ENCODE measurements at regions of chr6 and their contacts with region 1.

Region 1: GRCh38 chr6:79302341-79302740 is 67.9 kb upstream of the HMGN3 start:
- DNase-seq: peak; percentile 48 to 84
- H3K4me3 ChIP-seq: no peak overlapping the region
- H3K27ac ChIP-seq: peak overlapping the region; percentile 65
- H3K4me1 ChIP-seq: peaks cover 37% of the 10 kb centered on the region
- H3K27me3 ChIP-seq: no peaks in the 10 kb centered on the region
- CTCF ChIP-seq: no peak

Region 2: GRCh38 chr6:77457720-77458349 is 1844.5 kb before region 1 on chr6:
- CTCF ChIA-PET with region 1: no interaction called
- POLR2A ChIA-PET with region 1: no interaction called
- intact Hi-C with region 1: no loop called
- DNase-seq: peak in 1 of 2 experiments; percentile 56
- H3K4me3 ChIP-seq: no peak overlapping the region
- H3K27ac ChIP-seq: no peak overlapping the region
- H3K4me1 ChIP-seq: no peaks in the 10 kb centered on the region
- H3K27me3 ChIP-seq: no peaks in the 10 kb centered on the region
- CTCF ChIP-seq: peak; percentile 66

Region 3: GRCh38 chr6:78397499-78397898 is 904.8 kb before region 1 on chr6:
- CTCF ChIA-PET with region 1: no interaction called
- POLR2A ChIA-PET with region 1: interaction called, 17 read pairs
- intact Hi-C with region 1: no loop called
- DNase-seq: no peak
- H3K4me3 ChIP-seq: no peak overlapping the region
- H3K27ac ChIP-seq: no peak overlapping the region
- H3K4me1 ChIP-seq: no peaks in the 10 kb centered on the region
- H3K27me3 ChIP-seq: no peaks in the 10 kb centered on the region
- CTCF ChIP-seq: no peak

Region 4: GRCh38 chr6:79233611-79234149 is 68.7 kb before region 1 on chr6:
- CTCF ChIA-PET with region 1: no interaction called
- POLR2A ChIA-PET with region 1: no interaction called
- intact Hi-C with region 1: loop called (anchors 1 kb)
- DNase-seq: peak; percentile 66 to 80
- H3K4me3 ChIP-seq: peak overlapping the region; percentile 92
- H3K27ac ChIP-seq: peak overlapping the region; percentile 6; the same call in 1 of the 2 replicates
- H3K4me1 ChIP-seq: peaks cover 10% of the 10 kb centered on the region
- H3K27me3 ChIP-seq: no peaks in the 10 kb centered on the region
- CTCF ChIP-seq: 0 out of 2 replicates have a peak, but pooled peaks have one; percentile 25

Region 5: GRCh38 chr6:79353226-79353625 is 50.9 kb after region 1 on chr6:
- CTCF ChIA-PET with region 1: no interaction called
- POLR2A ChIA-PET with region 1: no interaction called
- intact Hi-C with region 1: no loop called
- DNase-seq: no peak
- H3K4me3 ChIP-seq: no peak overlapping the region
- H3K27ac ChIP-seq: no peak overlapping the region
- H3K4me1 ChIP-seq: no peaks in the 10 kb centered on the region
- H3K27me3 ChIP-seq: no peaks in the 10 kb centered on the region
- CTCF ChIP-seq: no peak

Region 6: DNA sequence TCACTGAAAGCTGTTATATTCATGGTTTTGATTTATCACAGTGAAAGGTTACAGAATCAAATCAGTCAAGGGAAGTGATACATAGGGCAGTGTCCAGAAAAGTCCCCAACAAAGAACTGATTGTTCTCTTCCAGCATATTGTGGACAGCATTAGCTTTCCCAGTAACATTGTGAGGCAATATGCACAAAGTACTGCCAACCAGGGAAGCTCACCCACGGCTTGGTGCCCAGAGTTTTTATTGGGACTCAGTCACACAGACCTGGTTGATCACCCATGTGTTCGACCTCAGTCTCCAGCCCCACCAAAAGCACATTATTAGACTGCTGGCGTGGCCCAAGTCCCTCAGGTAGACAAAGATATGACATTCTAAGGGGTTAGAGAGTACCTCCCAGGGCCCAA is 158.9 kb after region 1 on chr6:
- CTCF ChIA-PET with region 1: no interaction called
- POLR2A ChIA-PET with region 1: no interaction called
- intact Hi-C with region 1: loop called (anchors 5 kb)
- DNase-seq: no peak
- H3K4me3 ChIP-seq: no peak overlapping the region
- H3K27ac ChIP-seq: no peak overlapping the region
- H3K4me1 ChIP-seq: peaks cover 18% of the 10 kb centered on the region
- H3K27me3 ChIP-seq: no peaks in the 10 kb centered on the region
- CTCF ChIP-seq: no peak

Region 7: DNA sequence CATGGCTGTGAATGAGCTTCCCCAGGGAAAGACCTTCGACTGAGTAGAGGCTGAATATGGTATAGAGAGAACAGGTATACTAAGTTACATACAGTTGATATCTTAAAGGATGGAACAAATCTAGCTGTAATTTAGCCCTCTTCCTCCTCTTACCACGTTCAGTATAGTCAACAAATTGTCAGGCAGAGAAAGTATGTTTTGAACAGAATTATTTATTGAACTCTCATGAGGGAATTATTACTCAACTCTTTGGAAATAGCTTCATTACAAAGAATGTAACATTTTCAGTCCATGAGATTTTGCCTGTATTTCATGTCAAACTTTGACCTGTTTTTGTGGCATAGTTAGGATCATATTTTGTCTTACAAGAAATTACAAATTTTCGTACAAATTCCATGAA is 391.8 kb after region 1 on chr6:
- CTCF ChIA-PET with region 1: no interaction called
- POLR2A ChIA-PET with region 1: interaction called, 11 read pairs
- intact Hi-C with region 1: no loop called
- DNase-seq: no peak
- H3K4me3 ChIP-seq: no peak overlapping the region
- H3K27ac ChIP-seq: no peak overlapping the region
- H3K4me1 ChIP-seq: no peaks in the 10 kb centered on the region
- H3K27me3 ChIP-seq: no peaks in the 10 kb centered on the region
- CTCF ChIP-seq: no peak